Breast epithelium (tissue), 4 donors: ENCODE measurements at regions of chr2 and their contacts with region 1.

Region 1: GRCh38 chr2:70123051-70123828 is 36.0 kb downstream of the PCBP1 start:
- DNase-seq: no peak
- H3K4me3 ChIP-seq: peak overlapping the region; percentile 53 to 82 (median 65)
- H3K27ac ChIP-seq: peak overlapping the region; percentile 95 to 99
- H3K4me1 ChIP-seq: no peaks in the 10 kb centered on the region
- H3K27me3 ChIP-seq: no peaks in the 10 kb centered on the region
- CTCF ChIP-seq: peak in 1 of 3 donors; percentile 12
- POLR2A ChIP-seq: no peak

Region 2: DNA sequence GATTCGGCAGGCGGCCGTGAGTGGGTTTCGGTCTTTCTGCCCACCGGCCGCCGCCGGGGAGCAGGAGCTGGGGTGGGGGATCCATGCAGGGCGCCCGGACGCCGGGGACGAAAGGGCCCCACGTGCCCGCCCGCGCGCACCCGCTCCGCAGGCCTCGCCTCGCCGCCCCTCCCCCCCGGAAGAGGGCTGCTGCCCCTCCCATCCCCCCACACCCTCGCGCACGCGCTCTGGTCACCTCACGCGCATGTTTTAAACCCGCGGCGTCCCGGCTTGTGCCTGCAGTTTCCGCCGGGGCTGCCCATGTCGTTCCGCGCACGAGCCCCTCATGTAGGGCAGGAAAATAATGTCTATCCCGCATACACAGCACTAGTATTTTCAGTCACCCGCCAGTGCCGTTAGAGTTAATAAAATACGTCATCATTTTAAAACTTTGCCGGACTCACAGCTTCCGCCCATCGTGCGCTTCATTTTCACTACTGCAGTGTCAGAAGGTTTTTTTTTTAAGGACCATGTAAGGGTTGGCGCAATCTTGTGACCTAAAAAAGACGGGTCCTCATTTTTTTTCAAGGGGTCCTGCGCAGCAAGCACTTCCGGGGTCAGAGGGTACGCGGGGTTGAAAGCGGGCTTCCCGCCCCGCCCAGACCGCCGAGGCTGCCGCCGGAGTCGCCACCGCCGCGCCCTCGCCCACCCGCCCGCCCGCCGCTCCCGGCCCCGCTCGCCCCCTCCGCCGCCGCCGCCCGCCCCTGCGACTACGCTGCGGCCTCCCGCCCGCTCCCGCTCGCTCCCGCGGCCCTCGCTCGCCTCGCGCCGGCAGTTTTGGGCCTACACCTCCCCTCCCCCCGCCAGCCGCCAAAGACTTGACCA is 36.2 kb before region 1 on chr2 and contains the start of gene PCBP1:
- intact Hi-C with region 1: loop called (anchors 1 kb)
- DNase-seq: peak; percentile 92 to 96
- H3K4me3 ChIP-seq: peak within 1 kb of the TSS; percentile 77 to 90 (median 87)
- H3K27ac ChIP-seq: peak within 1 kb of the TSS; percentile 100
- H3K4me1 ChIP-seq: peaks cover 0 to 15% of the 10 kb centered on the region in 2 donors
- H3K27me3 ChIP-seq: no peaks in the 10 kb centered on the region
- CTCF ChIP-seq: no peak
- POLR2A ChIP-seq: peak; percentile 62
- total RNA-seq, gene PCBP1: 121 to 210 (median 145) TPM

Region 3: DNA sequence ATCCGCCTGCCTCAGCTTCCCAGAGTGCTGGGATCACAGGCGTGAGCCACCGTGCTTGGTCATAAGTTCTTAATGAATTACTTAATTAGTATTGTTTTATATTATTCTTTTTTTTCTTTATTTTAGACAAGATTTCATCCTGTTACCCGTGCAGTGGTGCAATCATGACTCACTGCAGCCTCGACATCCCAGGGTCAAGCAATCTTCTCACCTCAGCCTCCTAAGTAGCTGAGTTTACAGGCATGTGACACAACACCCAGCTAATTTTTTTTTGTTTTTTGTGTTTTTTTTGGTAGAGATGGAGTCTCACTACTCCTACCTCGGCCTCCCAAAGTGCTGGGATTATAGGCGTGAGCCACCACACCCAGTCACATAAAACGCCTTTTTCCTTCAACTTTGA is 50.3 kb after region 1 on chr2:
- intact Hi-C with region 1: no loop called
- DNase-seq: no peak
- H3K4me3 ChIP-seq: no peak overlapping the region
- H3K27ac ChIP-seq: no peak overlapping the region
- H3K4me1 ChIP-seq: no peaks in the 10 kb centered on the region
- H3K27me3 ChIP-seq: no peaks in the 10 kb centered on the region
- CTCF ChIP-seq: no peak
- POLR2A ChIP-seq: no peak

Region 4: DNA sequence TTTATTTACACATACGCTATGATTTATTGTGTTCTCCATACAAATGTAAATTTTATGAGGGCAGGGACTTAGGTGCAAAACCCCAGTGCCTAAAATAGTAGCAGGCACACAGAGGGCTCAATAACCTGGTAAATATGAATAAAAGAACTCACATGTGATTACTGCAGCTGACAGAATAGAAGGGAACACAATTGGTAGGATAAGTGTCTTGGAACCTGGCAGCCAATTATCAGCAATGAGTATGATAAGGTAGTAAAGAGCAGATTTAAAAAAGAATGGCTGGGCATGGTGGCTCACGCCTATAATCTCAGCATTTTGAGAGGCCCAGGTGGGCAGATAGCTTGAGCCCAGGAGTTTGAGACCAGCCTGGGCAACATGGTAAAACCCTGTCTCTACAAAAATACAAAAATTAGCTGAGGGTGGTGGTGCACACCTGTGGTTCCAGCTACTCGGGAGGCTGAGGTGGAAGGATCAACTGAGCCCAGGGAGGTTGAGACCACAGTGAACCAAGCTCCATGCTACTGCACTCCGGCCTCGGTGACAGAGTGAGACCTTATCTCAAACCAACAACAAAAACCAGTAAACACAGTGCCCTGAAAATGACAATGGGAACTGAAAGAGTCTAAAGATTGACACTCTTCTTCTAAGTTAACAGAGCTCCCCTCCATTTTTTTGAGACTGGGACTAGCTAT is 160.4 kb after region 1 on chr2:
- intact Hi-C with region 1: no loop called
- DNase-seq: no peak
- H3K4me3 ChIP-seq: no peak overlapping the region
- H3K27ac ChIP-seq: no peak overlapping the region
- H3K4me1 ChIP-seq: no peaks in the 10 kb centered on the region
- H3K27me3 ChIP-seq: no peaks in the 10 kb centered on the region
- CTCF ChIP-seq: no peak
- POLR2A ChIP-seq: no peak